Psoas muscle (tissue), 8 donors: ENCODE measurements at regions of chr6 and their contacts with region 1.

Region 1: DNA sequence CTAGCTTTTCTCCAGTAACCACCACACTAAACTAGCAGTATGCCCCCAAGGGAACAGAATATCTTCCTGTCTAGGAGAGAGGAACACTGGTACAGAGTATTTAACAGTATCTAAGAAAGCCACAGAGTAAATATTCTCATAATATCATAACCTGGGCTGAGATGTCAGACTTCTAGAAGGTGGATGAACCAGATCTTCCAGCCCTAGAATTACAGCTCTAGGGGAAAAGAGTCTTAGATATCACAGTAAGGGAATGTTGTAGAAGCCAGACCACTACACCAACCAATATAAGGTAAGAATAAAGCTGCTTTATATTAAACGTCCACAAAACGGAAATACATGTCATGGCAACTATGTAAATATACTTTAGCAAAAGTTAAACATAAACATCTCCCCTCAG is 12.4 kb downstream of the SERINC1 start:
- DNase-seq: no peak
- ATAC-seq: peak in 1 of 4 donors; percentile 28
- H3K4me3 ChIP-seq: no peak overlapping the region
- H3K27ac ChIP-seq: no peak overlapping the region
- H3K4me1 ChIP-seq: peaks cover 50% of the 10 kb centered on the region
- H3K27me3 ChIP-seq: no peaks in the 10 kb centered on the region
- CTCF ChIP-seq: no peak

Region 2: DNA sequence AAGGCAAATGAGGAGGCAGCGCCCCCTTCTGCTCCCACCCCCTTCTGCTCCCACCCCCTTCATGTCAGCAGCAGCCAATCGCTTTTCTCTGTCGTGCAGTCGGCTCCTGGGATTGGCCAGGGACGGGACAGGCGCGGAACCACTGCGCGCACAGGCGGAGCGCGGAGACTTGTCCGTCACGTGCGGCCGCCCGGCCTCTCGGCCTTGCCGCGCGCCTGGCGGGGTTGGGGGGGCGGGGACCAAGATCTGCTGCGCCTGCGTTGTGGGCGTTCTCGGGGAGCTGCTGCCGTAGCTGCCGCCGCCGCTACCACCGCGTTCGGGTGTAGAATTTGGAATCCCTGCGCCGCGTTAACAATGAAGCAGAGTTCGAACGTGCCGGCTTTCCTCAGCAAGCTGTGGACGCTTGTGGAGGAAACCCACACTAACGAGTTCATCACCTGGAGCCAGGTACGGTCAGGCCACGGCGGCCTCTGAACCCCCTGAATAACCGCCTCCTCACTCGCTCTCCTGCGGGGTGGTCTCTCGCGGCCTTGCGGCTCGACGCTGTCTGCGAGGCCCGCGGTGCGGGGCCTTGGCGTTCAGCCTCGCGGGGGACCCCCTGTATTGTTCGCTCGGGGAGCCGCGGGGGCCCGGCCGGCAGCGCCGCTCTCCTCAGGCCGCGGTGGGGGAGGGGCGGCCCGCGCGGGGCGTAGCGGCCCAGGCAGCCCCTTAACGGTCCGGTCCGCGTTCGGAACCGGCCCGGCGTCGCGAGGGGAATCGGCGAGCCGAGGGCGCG is 59.6 kb before region 1 on chr6 and contains the start of gene HSF2:
- intact Hi-C with region 1: loop called in 1 of 2 experiments (anchors 5 kb)
- DNase-seq: peak; percentile 96 to 98
- ATAC-seq: peak; percentile 92 to 99 (median 96)
- H3K4me3 ChIP-seq: peak within 1 kb of the TSS; percentile 95
- H3K27ac ChIP-seq: peak within 1 kb of the TSS; percentile 96
- H3K4me1 ChIP-seq: peaks cover 26% of the 10 kb centered on the region
- H3K27me3 ChIP-seq: no peaks in the 10 kb centered on the region
- CTCF ChIP-seq: peak; percentile 22
- total RNA-seq, gene HSF2: 17.9 to 58.2 (median 21.7) TPM

Region 3: GRCh38 chr6:122416825-122417224 is 42.4 kb before region 1 on chr6:
- intact Hi-C with region 1: loop called in 1 of 2 experiments (anchors 5 kb)
- DNase-seq: no peak
- ATAC-seq: peak; percentile 91 to 98 (median 96)
- H3K4me3 ChIP-seq: peak overlapping the region; percentile 33
- H3K27ac ChIP-seq: peak overlapping the region; percentile 82
- H3K4me1 ChIP-seq: peaks cover 50% of the 10 kb centered on the region
- H3K27me3 ChIP-seq: no peaks in the 10 kb centered on the region
- CTCF ChIP-seq: no peak

Region 4: GRCh38 chr6:122428781-122429180 is 30.4 kb before region 1 on chr6:
- intact Hi-C with region 1: loop called in 1 of 2 experiments (anchors 5 kb)
- DNase-seq: no peak
- ATAC-seq: no peak
- H3K4me3 ChIP-seq: no peak overlapping the region
- H3K27ac ChIP-seq: no peak overlapping the region
- H3K4me1 ChIP-seq: peaks cover 12% of the 10 kb centered on the region
- H3K27me3 ChIP-seq: no peaks in the 10 kb centered on the region
- CTCF ChIP-seq: no peak